Lower leg skin (tissue), 4 donors: ENCODE measurements at regions of chr15 and their contacts with region 1.

Region 1: DNA sequence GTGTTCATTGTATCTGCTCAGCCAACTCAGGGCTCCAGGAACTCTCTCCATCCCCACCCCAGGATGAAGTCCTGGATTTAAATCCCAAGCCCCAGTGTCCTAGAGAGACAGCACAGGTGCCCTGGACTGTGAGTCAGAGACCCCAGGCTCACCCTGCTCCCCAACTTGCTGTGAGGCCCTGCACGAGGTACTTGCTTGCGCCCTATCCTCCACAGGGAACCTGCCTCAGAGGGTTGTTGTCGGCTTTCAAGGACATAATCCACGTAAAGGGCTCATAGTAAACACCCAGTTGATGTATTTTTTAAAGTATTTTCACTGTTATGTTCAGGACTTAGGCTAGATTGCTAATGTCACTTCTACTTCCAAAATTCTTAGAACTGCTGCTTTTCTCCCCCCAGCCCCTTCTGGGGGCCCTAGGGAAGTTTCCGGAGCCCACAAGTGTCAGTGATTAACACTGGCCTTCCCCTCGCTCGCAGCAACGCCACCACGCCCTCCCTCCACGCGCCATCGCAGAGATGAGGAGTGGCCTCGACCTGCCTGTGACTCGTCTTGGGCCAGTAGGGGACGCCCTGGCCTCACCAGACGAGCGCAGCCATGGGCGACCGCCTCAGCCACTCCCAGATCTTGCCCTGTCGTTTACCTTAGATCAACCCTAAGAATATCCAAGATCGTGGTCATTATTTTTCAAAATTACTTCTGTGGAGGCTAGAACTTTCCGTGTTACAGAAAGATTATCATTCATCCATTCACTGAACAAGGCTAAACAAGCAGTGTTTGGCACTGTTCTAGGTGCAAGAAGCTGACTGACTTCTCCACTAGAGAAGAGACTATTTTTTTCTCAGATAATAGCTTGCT is 6.0 kb upstream of the SRP14 start:
- DNase-seq: peak; percentile 88 to 97
- H3K4me3 ChIP-seq: no peak overlapping the region
- CTCF ChIP-seq: peak in 1 of 3 donors; percentile 89
- POLR2A ChIP-seq: no peak

Region 2: GRCh38 chr15:40016224-40016865 is 28.6 kb before region 1 on chr15:
- intact Hi-C with region 1: no loop called
- DNase-seq: no peak
- H3K4me3 ChIP-seq: no peak overlapping the region
- CTCF ChIP-seq: no peak
- POLR2A ChIP-seq: no peak

Region 3: GRCh38 chr15:40108855-40109735 is 64.2 kb after region 1 on chr15 and contains the start of gene BMF:
- intact Hi-C with region 1: loop called (anchors 10 kb)
- DNase-seq: peak; percentile 99 to 100
- H3K4me3 ChIP-seq: peak within 1 kb of the TSS; percentile 77
- CTCF ChIP-seq: no peak
- POLR2A ChIP-seq: no peak
- total RNA-seq, gene BMF: 2.1 to 11.8 (median 8.4) TPM

Region 4: GRCh38 chr15:40382580-40383456 is 337.9 kb after region 1 on chr15 and contains the start of gene KNSTRN:
- intact Hi-C with region 1: no loop called
- DNase-seq: peak; percentile 92 to 98
- H3K4me3 ChIP-seq: peak within 1 kb of the TSS; percentile 81
- CTCF ChIP-seq: no peak
- POLR2A ChIP-seq: no peak
- total RNA-seq, gene KNSTRN: 7.6 to 24.8 (median 13.1) TPM

Region 5: DNA sequence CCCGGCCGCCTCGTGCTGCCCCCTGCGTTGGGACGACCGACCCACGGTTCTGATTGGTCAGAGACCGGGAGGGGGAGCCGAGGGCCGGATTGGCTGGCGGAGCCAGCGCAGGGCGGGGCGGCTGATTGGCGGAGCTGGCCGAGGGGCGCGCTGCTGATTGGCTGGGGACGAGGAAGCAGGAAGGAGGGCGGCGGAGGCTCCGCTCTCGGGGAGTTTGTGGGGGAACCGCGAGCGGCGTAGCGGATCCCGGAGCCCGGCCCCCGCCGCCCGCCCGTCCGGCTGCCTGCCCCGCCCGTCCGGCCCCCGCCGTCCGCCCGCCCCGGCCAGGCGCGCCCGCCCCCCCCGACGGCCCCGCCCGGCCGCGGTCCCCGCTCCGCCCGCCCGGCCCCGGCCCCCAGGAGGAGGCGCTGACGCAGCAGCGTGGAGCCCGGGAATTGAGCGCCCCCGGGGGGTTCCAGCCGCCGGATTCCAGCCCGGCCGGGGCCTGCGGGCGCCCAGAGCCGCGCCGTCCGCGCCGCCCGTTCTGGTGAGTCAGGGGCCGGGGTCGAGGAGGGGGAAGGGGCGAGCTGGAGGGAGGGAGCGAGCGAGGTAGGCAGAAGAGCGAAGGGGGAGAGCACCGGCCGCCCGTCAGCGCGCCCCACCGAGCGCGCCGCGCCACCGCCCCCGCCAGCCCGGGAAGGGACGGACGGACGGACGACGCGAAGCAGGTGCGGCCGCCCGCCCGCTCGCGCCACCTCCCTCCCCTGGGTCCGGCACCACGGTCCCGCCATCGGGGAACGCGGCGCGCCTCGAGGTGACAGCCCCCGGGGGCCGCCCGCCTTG is 396.0 kb after region 1 on chr15 and contains the start of gene BAHD1:
- intact Hi-C with region 1: no loop called
- DNase-seq: peak; percentile 96 to 99
- H3K4me3 ChIP-seq: peak within 1 kb of the TSS; percentile 88
- CTCF ChIP-seq: no peak
- POLR2A ChIP-seq: no peak
- total RNA-seq, gene BAHD1: 12.8 to 18.5 (median 16.2) TPM